Naive thymus-derived CD4-positive, alpha-beta T cell (primary cell): ENCODE measurements at regions of chr7 and their contacts with region 1.

Region 1: GRCh38 chr7:74206589-74207120 is 3.2 kb upstream of the LAT2 start:
- DNase-seq: peak; percentile 55 to 87 (median 72)
- ATAC-seq: peak; percentile 86
- H3K4me3 ChIP-seq: no peak overlapping the region
- H3K4me3 Mint-ChIP-seq: peak overlapping the region in 9 of 10 donors; percentile 12 to 55 (median 19)
- H3K27ac ChIP-seq: no peak overlapping the region
- H3K27ac Mint-ChIP-seq: peak overlapping the region in 2 of 9 donors; percentile 6 to 55
- H3K4me1 ChIP-seq: peaks cover 5 to 6% of the 10 kb centered on the region in 2 donors
- H3K4me1 Mint-ChIP-seq: peaks cover 14 to 29% (median 19%) of the 10 kb centered on the region in 7 donors
- H3K27me3 ChIP-seq: no peaks in the 10 kb centered on the region
- H3K27me3 Mint-ChIP-seq: peaks cover 0 to 6% (median 4%) of the 10 kb centered on the region in 5 donors

Region 2: DNA sequence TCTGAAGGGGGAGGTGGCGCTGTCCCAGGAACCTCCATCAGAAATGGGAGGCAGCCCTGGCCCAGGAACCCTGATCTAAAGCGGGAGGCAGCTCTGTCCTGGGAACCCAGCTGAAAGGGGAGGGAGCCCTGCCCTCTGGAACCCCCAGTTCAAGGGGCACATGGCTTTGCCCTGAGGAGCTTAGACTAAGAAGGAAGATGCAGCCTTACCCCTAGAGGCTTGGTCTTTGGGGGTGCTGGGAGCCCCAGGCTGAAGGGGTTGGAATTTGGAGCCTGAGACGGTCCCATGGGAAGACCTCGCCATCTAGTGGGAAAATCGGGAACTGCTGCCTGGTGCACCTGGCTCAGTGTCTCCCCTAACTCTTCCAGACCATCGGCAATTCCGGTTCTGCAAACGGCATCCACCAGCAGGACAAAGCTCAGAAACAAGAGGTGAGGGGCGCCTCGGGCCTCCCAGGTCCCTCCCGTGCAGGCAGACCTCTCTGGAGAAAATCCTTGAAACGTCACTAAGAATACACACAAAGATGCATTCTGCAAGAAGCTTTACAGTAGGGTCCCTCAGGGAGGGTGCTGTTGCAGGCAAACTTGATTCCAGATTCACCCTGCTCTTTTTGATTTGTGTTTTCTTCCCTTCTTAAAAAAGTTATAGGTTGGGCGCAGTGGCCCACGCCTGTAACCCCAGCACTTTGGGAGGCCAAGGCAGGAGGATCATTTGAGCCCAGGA is 194.6 kb after region 1 on chr7:
- CTCF ChIA-PET with region 1: interaction called, 45 read pairs
- POLR2A ChIA-PET with region 1: no interaction called
- intact Hi-C with region 1: loop called (anchors 1 kb)
- DNase-seq: peak; percentile 33 to 77 (median 56)
- ATAC-seq: peak; percentile 76
- H3K4me3 ChIP-seq: no peak overlapping the region
- H3K4me3 Mint-ChIP-seq: no peak overlapping the region
- H3K27ac ChIP-seq: no peak overlapping the region
- H3K27ac Mint-ChIP-seq: no peak overlapping the region
- H3K4me1 ChIP-seq: no peaks in the 10 kb centered on the region
- H3K4me1 Mint-ChIP-seq: peaks cover 0 to 2% (median 0%) of the 10 kb centered on the region in 7 donors
- H3K27me3 ChIP-seq: no peaks in the 10 kb centered on the region
- H3K27me3 Mint-ChIP-seq: no peaks in the 10 kb centered on the region

Region 3: DNA sequence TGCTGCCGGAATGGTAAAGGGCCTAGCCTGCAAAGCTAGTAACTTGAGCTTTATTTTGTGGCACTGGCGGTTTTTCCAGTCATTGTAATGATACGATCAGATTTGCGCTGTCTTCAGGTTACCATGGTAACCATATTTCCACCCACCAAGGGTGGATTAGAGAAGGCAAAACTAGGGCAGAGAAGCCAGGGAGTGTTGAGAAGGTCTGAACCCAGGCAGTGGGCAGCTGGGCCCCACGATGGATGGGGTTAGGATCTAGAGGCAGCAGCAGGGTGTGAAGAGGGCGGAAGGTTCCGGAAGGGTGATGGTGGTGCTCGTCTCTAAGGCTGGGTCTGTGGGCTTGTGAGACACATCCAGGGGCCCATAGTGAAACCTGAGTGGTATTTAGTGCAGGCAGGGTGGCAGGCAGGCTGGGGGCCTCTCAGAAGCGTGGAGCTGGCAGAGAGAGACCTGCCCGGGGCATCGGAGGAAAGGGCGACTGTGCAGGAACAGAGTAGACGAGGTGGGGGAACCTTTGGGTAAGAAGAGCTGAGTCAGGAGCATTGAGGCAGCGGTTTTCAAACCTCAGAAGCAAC is 362.9 kb after region 1 on chr7:
- CTCF ChIA-PET with region 1: no interaction called
- POLR2A ChIA-PET with region 1: no interaction called
- intact Hi-C with region 1: loop called in 1 of 2 experiments (anchors 2 kb)
- DNase-seq: peak in 1 of 9 donors; percentile 2
- ATAC-seq: peak; percentile 28
- H3K4me3 ChIP-seq: no peak overlapping the region
- H3K4me3 Mint-ChIP-seq: peak overlapping the region in 4 of 10 donors; percentile 35 to 55 (median 48)
- H3K27ac ChIP-seq: no peak overlapping the region
- H3K27ac Mint-ChIP-seq: peak overlapping the region in 5 of 9 donors; percentile 42 to 80 (median 62)
- H3K4me1 ChIP-seq: no peaks in the 10 kb centered on the region
- H3K4me1 Mint-ChIP-seq: peaks cover 0 to 18% (median 4%) of the 10 kb centered on the region in 7 donors
- H3K27me3 ChIP-seq: no peaks in the 10 kb centered on the region
- H3K27me3 Mint-ChIP-seq: peaks cover 0 to 3% (median 0%) of the 10 kb centered on the region in 5 donors